ENCODE measurements at regions of chr1 and their contacts with region 1.

Region 1: DNA sequence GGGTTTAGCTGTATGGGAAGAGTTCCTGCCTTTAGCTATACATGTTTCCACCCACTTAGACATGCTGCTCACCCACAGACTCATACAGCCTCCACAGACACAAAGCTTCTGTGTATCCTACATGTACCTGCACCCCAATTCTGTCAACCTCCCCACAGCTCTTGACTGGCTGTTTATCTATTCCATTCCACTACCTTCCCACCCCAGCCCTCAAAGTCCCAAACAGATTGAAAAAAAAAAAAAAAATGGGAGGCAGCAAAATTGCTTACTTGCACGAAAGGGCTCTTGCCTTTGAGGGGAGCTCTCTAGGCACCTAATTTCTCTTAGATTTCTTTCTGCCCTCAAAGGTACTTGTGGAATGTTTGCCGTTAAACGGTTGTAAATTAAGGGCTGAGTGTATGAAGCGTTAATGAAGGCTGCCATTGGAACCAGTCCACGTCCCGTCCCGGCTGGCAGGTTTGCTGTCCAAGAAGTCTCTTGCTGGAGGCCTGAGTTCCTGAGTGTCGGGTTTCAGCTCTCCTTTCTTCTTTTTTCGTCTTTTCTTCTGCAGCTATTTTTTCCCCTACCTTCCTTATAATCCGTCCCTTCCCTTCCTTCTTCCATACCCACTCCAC is 43.6 kb downstream of the PBX1 start:
- DNase-seq: no peak
- H3K4me3 ChIP-seq: no peak overlapping the region
- H3K27ac ChIP-seq: peak overlapping the region; percentile 25
- H3K4me1 ChIP-seq: peaks cover 25% of the 10 kb centered on the region
- H3K27me3 ChIP-seq: no peaks in the 10 kb centered on the region
- CTCF ChIP-seq: peak in 1 of 2 donors; percentile 22

Region 2: GRCh38 chr1:164361927-164362326 is 240.7 kb before region 1 on chr1:
- CTCF ChIA-PET with region 1: no interaction called
- dilution Hi-C with region 1: no loop called
- in situ Hi-C with region 1: no loop called
- intact Hi-C with region 1: no loop called
- DNase-seq: no peak
- H3K4me3 ChIP-seq: no peak overlapping the region
- H3K27ac ChIP-seq: no peak overlapping the region
- H3K4me1 ChIP-seq: no peaks in the 10 kb centered on the region
- H3K27me3 ChIP-seq: no peaks in the 10 kb centered on the region
- CTCF ChIP-seq: no peak

Region 3: GRCh38 chr1:164699815-164700491 is 97.4 kb after region 1 on chr1:
- CTCF ChIA-PET with region 1: interaction called, 29 read pairs
- dilution Hi-C with region 1: no loop called
- in situ Hi-C with region 1: no loop called
- intact Hi-C with region 1: no loop called
- DNase-seq: no peak
- H3K4me3 ChIP-seq: no peak overlapping the region
- H3K27ac ChIP-seq: no peak overlapping the region
- H3K4me1 ChIP-seq: peaks cover 28% of the 10 kb centered on the region
- H3K27me3 ChIP-seq: no peaks in the 10 kb centered on the region
- CTCF ChIP-seq: no peak